ENCODE measurements at regions of chr7 and their contacts with region 1.

Region 1: DNA sequence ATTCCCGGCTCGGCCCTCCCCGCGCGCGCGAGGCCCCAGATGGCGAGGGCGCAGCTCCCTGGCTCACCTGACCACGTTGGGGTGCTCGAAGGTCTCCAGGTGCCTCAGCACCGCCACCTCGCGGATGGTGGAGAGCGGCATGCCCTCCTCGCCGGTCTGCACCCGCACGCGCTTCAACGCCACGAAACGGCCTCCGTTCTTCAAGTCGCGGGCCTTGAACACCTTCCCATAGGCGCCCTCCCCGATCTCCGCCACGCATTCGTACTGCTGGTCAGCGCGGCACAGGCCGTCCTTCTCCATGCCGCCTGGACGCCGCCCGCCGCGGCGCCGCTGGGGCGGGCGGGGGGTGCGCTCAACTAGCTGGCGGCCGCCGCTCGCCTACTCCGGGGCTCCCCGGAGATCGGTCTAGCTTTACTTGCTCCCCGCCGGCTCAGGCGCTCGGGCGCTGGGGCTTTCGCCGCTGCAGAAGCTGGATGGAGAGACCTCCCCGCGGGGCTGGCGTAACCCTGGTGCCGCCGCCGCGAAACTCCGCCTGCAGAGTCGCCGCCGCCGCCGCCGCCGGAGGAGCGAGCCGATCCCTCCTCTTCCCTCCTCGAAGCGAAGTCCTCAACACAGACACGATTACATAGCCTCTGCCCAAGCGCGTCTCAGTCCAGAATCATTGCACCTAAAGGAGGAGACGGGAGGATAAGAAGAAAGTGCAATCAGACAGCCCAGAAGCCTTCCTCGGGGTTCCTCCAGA is 3.2 kb downstream of the CDK6 start:
- DNase-seq: peak; percentile 63 to 86 (median 81)
- H3K4me3 ChIP-seq: peak overlapping the region; percentile 60 to 97 (median 85)
- H3K27ac ChIP-seq: peak overlapping the region; percentile 55 to 97 (median 90)
- H3K27me3 ChIP-seq: peaks cover 0 to 4% (median 0%) of the 10 kb centered on the region in 45 donors
- CTCF ChIP-seq: peak; percentile 64 to 96 (median 86)

Region 2: DNA sequence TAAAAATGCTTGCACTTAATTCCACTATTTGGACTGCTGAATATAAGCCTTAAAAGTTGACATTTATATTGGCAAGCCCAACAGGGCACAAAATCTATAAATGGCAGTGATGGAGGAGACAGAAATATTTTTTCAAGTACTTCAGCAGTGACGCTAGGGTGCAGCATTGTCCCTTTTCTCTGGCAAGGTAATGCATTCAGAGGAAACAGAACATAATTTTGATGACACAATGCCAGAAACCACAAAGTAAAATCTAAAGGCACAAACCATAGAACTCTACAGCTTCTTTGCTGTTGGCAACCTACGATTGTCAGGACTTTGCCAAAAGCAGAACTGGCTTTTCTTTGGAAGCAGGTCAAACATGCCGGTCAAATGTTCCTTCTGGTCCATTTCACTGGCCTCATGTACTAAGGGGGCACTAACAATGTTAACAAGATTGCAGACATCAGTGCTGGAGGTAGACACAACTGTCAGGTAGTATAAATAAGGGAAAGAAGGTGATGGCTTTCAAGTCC is 212.1 kb before region 1 on chr7:
- intact Hi-C with region 1: loop called (anchors 1 kb)
- DNase-seq: peak in 5 of 10 donors; percentile 36 to 70 (median 49)
- H3K4me3 ChIP-seq: peak overlapping the region in 3 of 59 donors; percentile 6 to 35 (median 6)
- H3K27ac ChIP-seq: peak overlapping the region in 43 of 59 donors; percentile 1 to 74 (median 43)
- H3K27me3 ChIP-seq: no peaks in the 10 kb centered on the region
- CTCF ChIP-seq: peak; percentile 61 to 95 (median 83)

Region 3: DNA sequence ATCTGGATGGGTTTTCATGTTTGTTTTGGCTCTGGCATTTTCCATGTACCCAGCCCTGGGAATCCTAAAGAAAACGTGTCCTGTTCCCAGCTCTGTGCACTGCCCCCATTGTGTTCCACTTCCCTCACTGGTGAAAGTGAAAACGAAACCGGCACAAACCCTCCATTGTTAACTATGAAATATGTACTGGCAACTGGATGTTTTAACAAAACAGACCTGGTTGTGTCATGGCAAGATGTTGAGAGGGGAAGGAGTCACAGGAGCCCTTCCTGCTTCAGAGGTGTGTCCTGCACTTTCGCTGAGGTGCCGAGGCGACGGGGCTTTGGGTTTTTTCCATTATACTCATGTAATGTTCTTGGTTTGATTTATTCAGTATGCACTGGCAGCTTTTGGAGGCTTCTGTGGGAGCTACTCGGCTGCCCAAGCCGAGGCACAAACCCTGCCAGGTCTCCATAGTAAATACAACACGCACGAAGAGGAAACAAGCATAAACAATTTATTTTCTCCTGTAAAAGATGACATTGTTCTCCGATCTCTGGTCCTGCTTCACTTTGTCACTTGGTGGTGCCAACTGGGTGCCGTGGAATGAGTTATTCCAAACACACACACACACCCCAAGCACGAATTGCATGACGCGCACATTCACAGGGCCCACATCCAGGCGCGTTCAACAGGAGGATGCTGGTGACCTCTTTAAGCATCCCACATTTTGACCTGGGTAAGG is 115.0 kb before region 1 on chr7:
- intact Hi-C with region 1: loop called (anchors 1 to 2 kb)
- DNase-seq: peak in 9 of 10 donors; percentile 45 to 75 (median 65)
- H3K4me3 ChIP-seq: peak overlapping the region; percentile 40 to 80 (median 65)
- H3K27ac ChIP-seq: peak overlapping the region; percentile 88 to 99 (median 97)
- H3K27me3 ChIP-seq: no peaks in the 10 kb centered on the region
- CTCF ChIP-seq: peak in 11 of 56 donors; percentile 6 to 33 (median 14)

Region 4: DNA sequence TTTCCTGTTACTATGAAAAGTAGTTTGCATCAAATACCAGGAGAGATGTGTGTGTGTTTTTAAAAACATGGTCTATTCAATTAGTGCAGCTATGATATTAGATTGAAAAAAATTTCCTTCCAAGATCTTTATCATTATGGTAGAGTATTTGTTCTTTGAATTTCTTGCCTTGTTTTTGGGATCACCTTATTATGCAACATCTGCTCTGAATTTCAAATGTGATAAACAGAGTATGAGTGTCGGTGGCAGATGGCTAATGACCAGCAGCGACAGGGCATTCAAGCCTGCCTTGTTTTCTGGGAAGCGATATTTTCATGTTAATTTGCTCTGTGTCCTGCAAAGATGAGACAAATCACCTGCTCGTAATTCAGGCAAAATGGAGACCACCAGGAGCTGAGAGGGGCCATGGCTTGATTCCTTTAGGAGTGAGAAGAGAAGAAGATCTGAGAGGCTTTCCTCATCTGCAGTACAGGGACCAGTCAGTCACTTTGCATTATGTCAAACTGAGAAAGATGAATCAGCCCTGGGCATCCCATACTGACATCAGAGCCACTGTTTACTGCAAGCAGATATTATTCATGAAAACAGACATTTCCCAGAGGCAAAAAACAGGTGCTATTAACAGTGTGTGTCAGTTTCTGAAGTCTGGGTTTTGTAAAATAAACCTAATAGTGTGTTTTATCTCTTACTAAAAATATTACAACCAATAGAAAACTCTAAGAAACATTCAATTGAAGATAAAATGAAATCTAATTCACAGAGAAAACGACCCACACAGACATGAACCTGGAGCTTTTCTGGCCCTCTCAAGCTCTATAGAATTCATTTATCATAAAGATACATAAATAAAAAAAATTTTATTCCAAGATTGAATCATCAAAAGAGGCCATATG is 64.4 kb before region 1 on chr7:
- intact Hi-C with region 1: loop called in 1 of 2 experiments (anchors 5 kb)
- DNase-seq: peak in 1 of 10 donors; percentile 29
- H3K4me3 ChIP-seq: peak overlapping the region in 26 of 59 donors; percentile 7 to 44 (median 22)
- H3K27ac ChIP-seq: peak overlapping the region in 58 of 59 donors; percentile 14 to 86 (median 74)
- H3K27me3 ChIP-seq: no peaks in the 10 kb centered on the region
- CTCF ChIP-seq: no peak

Region 5: GRCh38 chr7:92953657-92954056 is 120.5 kb after region 1 on chr7:
- intact Hi-C with region 1: no loop called
- DNase-seq: no peak
- H3K4me3 ChIP-seq: no peak overlapping the region
- H3K27ac ChIP-seq: no peak overlapping the region
- H3K27me3 ChIP-seq: peaks cover 0 to 3% (median 0%) of the 10 kb centered on the region in 45 donors
- CTCF ChIP-seq: no peak

Region 6: DNA sequence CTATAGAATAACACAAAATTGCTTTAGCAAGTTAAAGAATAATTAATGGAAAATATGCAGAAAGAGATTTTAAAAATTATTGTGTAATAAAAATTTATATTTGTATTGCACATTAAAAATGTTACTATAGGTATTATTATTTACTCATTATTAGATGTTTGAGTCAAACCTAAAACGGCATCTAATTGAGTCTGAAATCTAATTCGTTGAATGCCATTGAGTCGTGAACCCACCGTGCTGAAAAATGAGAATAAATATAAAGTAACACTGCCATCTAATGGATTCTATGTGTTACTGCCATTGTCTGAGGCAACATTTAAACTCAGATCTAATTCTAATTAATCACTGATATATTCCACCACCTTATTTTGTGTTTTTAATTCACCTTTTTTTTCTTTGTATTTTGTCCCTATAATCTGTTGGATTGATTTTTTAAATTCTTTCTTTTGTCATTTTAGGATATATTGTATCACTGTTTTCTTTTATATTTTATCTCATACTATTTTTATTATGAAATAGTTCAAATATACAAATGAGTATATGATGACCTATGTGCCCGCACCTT is 222.4 kb after region 1 on chr7:
- intact Hi-C with region 1: loop called in 1 of 2 experiments (anchors 10 kb)
- DNase-seq: no peak
- H3K4me3 ChIP-seq: peak overlapping the region in 1 of 59 donors; percentile 5
- H3K27ac ChIP-seq: no peak overlapping the region
- H3K27me3 ChIP-seq: peaks cover 0 to 4% (median 0%) of the 10 kb centered on the region in 45 donors
- CTCF ChIP-seq: peak; percentile 65 to 96 (median 82)

Measured in dorsolateral prefrontal cortex (tissue), 120 donors.